Right lobe of liver (tissue), 6 donors: ENCODE measurements at regions of chr9 and their contacts with region 1.

Region 1: DNA sequence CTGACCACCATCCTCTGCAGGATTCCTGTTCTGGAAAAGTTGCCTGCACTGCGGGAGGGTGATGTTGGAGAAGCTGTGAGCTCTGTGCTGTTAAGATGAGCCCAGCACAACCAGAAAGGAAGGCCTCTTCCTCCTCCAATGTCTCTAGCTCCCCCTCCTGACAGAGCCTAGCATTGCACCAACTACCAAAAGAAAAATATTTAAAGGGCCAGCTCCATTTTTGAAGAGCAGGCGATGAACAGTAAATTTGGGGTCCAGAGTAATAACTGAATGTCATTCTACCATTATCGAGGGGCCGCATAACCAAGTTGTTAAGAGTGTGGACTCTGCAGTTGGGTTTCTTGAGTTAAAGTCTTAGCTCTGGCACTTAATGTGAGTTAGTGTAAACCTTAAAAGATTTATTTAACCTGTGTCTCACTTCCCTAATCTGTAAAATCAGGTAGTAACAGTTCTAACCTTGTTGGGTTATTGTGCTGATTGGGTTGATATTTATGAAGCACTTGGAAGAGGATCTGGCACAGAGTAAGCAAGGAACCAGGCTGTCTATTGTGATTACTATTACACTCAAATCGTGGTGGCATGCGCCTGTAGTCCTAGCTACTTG is 3.9 kb downstream of the TEX53 start:
- DNase-seq: peak in 2 of 3 donors; percentile 44 to 68
- ATAC-seq: peak; percentile 95 to 99 (median 98)
- H3K4me3 ChIP-seq: no peak overlapping the region
- H3K27ac ChIP-seq: no peak overlapping the region
- H3K4me1 ChIP-seq: no peaks in the 10 kb centered on the region
- H3K27me3 ChIP-seq: no peaks in the 10 kb centered on the region
- CTCF ChIP-seq: peak; percentile 88 to 93 (median 90)
- POLR2A ChIP-seq: no peak

Region 2: GRCh38 chr9:114405294-114406034 is 248.2 kb before region 1 on chr9:
- intact Hi-C with region 1: loop called (anchors 10 kb)
- DNase-seq: peak; percentile 69 to 82 (median 78)
- ATAC-seq: peak; percentile 92 to 97 (median 94)
- H3K4me3 ChIP-seq: no peak overlapping the region
- H3K27ac ChIP-seq: no peak overlapping the region
- H3K4me1 ChIP-seq: no peaks in the 10 kb centered on the region
- H3K27me3 ChIP-seq: no peaks in the 10 kb centered on the region
- CTCF ChIP-seq: peak; percentile 80 to 88 (median 86)
- POLR2A ChIP-seq: no peak

Region 3: DNA sequence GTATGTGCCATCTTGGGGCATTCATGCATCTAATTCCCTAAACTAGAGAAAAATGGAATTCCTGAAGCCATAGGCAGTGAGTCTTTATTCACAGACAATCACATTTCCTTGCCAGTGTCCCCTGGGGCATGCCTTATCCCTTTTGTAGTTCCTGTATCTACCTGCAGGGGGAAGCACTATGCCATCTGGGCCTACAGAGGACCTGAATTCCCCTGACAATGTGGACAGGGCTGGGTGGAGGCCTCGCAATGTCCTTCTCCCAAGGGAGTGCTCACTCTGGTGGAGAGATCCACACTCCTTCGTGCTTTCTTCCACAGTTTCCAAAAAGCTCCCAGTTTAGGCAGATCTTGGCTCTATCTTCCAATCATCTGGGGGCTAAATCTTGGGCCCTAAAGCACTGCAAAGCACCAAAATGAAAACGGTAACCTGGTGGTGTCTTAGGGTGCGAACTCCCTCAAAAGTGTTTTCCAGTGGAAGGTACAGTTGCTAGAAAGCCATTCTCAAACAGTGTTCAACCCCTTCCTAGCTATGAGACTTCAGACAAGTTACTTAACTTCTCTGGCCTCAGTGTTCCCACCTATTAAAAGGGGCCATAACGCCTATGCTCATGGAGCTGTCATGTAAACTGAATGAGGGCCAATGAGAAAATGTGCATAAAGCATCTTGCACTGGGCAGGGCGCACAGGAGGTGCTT is 165.9 kb before region 1 on chr9:
- intact Hi-C with region 1: loop called in 1 of 2 experiments (anchors 10 kb)
- DNase-seq: peak in 2 of 3 donors; percentile 45 to 69
- ATAC-seq: peak; percentile 98 to 100 (median 99)
- H3K4me3 ChIP-seq: no peak overlapping the region
- H3K27ac ChIP-seq: no peak overlapping the region
- H3K4me1 ChIP-seq: no peaks in the 10 kb centered on the region
- H3K27me3 ChIP-seq: no peaks in the 10 kb centered on the region
- CTCF ChIP-seq: peak; percentile 81 to 91 (median 90)
- POLR2A ChIP-seq: no peak

Region 4: DNA sequence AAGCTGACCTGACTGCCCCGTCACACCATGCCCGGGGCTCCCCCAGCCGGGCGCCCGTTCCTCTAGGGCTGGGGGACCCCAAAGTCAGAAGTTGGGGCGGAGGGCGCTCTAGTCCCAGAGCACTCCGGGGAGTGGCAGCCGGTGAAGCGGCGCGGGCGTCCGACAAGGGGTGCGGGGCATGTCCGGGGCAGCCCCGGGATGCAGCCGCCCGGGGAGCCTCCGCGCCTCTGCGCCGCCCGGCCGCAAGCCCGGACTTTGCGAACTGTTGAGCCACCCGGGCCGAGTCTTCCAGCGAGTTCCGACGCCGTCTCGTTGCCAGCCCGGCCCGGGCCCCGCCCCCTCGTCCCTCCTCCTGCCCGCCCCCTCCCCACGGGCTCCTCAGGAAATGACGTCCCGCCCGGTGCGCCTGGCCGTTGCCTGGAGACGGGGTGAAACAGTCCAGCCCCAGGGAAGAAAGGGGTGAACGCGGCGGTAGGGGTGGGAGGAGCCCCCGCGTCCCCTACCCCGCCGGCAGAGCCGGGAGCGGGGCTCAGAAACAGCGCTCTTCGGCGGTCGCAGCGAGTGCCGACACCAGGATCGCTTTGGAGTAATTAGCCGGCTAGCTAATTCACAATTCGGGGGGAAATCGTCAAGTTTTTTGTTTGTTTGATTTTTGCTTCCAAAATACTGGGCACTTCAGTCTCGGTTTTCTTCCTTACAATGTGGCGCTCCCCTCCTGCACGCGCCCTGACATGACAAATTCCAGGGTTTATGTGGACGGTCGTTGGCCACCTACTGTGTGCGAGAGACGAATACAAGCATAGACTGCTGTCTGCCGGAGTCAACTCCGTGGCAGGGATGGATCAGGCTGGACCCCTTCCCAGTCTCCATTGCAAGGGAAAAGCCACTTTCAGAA is 148.2 kb before region 1 on chr9 and contains the start of gene WHRN:
- intact Hi-C with region 1: loop called in 1 of 2 experiments (anchors 10 kb)
- DNase-seq: peak; percentile 96
- ATAC-seq: peak; percentile 97
- H3K4me3 ChIP-seq: peak within 1 kb of the TSS; percentile 53 to 68 (median 64)
- H3K27ac ChIP-seq: peak within 1 kb of the TSS in 1 of 3 donors; percentile 39
- H3K4me1 ChIP-seq: peaks cover 0 to 8% (median 0%) of the 10 kb centered on the region in 4 donors
- H3K27me3 ChIP-seq: no peaks in the 10 kb centered on the region
- CTCF ChIP-seq: no peak
- POLR2A ChIP-seq: peak; percentile 70
- total RNA-seq, gene WHRN: 2.1 to 3.7 (median 2.7) TPM